A673 (cell line): ENCODE measurements at regions of chr11 and their contacts with region 1.

Region 1: DNA sequence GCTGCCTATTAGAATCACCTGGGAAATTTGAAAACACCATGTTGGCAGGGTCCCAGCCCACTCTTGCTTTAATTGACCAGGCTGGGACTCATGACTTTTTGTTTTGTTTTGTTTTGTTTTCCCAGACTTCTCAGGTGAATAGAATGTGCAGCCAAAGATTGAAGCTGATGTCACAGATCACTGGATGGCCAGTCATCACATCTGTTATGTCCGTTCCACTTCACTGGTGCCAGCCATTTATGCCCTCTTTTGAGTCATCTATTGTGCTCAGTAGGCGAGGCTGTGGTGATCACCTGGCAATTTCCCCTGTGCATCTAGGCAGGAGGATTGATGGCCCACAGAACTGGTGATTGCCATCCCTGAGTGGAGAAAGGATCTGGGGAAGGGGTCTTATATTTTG is 297.3 kb downstream of the INSC start:
- DNase-seq: no peak
- H3K4me3 ChIP-seq: no peak overlapping the region
- H3K27ac ChIP-seq: no peak overlapping the region
- H3K4me1 ChIP-seq: no peaks in the 10 kb centered on the region
- H3K27me3 ChIP-seq: no peaks in the 10 kb centered on the region
- CTCF ChIP-seq: no peak

Region 2: DNA sequence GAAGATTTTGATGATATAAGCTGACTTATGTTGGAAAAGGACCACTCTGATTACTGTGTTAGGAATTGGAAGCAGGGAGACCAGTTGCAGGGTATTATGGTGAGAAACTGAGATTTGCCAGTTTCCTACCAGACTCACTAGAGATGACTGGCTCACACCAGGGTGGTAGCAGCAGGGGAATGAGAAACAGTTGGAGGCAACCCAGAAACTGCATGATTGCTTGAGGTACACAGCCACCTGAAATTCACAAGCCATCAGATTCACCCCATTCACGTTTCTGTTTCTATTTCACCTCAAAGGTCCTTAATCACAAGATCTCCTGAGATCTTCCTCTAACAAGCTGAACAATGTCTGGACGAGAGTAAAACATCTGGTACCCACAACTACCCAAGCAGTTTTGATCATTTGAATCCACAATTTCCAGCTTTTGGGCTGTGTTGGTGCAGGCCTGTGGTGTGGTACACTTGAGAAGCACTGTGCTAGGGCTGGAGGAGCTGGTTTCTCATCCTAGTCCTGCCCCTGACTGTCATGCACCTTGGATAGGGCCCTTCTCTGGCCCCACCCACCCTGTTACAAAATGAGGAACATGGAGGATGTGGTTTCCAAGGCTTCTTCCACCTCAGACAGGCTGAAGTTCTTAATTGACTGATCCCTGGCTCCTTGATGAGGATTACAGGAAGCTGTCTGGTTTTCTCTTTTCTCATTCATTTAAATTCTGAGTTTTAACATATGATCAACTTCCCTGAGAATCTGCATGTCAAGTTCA is 63.9 kb before region 1 on chr11:
- CTCF ChIA-PET with region 1: no interaction called
- POLR2A ChIA-PET with region 1: no interaction called
- intact Hi-C with region 1: no loop called
- DNase-seq: no peak
- H3K4me3 ChIP-seq: no peak overlapping the region
- H3K27ac ChIP-seq: no peak overlapping the region
- H3K4me1 ChIP-seq: no peaks in the 10 kb centered on the region
- H3K27me3 ChIP-seq: no peaks in the 10 kb centered on the region
- CTCF ChIP-seq: no peak

Region 3: DNA sequence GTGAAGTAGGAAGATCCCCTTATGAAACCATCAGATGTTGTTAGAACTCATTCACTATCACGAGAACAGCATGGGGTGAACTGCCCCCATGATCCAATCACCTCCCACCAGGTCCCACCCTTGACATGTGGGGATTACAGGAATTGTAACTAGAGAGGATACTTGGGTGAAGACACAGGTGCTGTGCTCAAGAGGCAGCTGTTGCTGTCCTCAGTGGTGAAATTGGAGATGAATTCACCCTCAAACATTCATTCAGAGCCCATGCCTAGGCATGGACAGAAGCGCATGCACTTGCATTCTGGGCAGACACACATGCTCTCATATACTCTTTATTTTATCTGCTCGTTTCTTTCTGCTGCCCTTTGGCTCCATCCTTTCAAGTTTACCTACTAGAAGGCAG is 87.6 kb after region 1 on chr11:
- CTCF ChIA-PET with region 1: no interaction called
- POLR2A ChIA-PET with region 1: no interaction called
- intact Hi-C with region 1: loop called (anchors 5 kb)
- DNase-seq: no peak
- H3K4me3 ChIP-seq: no peak overlapping the region
- H3K27ac ChIP-seq: no peak overlapping the region
- H3K4me1 ChIP-seq: no peaks in the 10 kb centered on the region
- H3K27me3 ChIP-seq: no peaks in the 10 kb centered on the region
- CTCF ChIP-seq: no peak

Region 4: GRCh38 chr11:15563054-15563453 is 151.0 kb after region 1 on chr11:
- CTCF ChIA-PET with region 1: no interaction called
- POLR2A ChIA-PET with region 1: no interaction called
- intact Hi-C with region 1: no loop called
- DNase-seq: no peak
- H3K4me3 ChIP-seq: no peak overlapping the region
- H3K27ac ChIP-seq: no peak overlapping the region
- H3K4me1 ChIP-seq: no peaks in the 10 kb centered on the region
- H3K27me3 ChIP-seq: no peaks in the 10 kb centered on the region
- CTCF ChIP-seq: no peak

Region 5: GRCh38 chr11:15641271-15642045 is 229.4 kb after region 1 on chr11:
- CTCF ChIA-PET with region 1: no interaction called
- POLR2A ChIA-PET with region 1: no interaction called
- intact Hi-C with region 1: no loop called
- DNase-seq: no peak
- H3K4me3 ChIP-seq: no peak overlapping the region
- H3K27ac ChIP-seq: no peak overlapping the region
- H3K4me1 ChIP-seq: no peaks in the 10 kb centered on the region
- H3K27me3 ChIP-seq: no peaks in the 10 kb centered on the region
- CTCF ChIP-seq: no peak

Region 6: GRCh38 chr11:15969281-15969680 is 557.2 kb after region 1 on chr11:
- CTCF ChIA-PET with region 1: no interaction called
- POLR2A ChIA-PET with region 1: no interaction called
- intact Hi-C with region 1: no loop called
- DNase-seq: peak; percentile 73
- H3K4me3 ChIP-seq: peak overlapping the region; percentile 15
- H3K27ac ChIP-seq: peak overlapping the region; percentile 83
- H3K4me1 ChIP-seq: peaks cover 35% of the 10 kb centered on the region
- H3K27me3 ChIP-seq: no peaks in the 10 kb centered on the region
- CTCF ChIP-seq: no peak